A673 (cell line): ENCODE measurements at regions of chr1 and their contacts with region 1.

Region 1: GRCh38 chr1:176897350-176898236 is 266.9 kb downstream of the ASTN1 start:
- DNase-seq: peak; percentile 82
- H3K4me3 ChIP-seq: peak overlapping the region; percentile 32
- H3K27ac ChIP-seq: no peak overlapping the region
- H3K4me1 ChIP-seq: peaks cover 36% of the 10 kb centered on the region
- H3K27me3 ChIP-seq: no peaks in the 10 kb centered on the region
- CTCF ChIP-seq: peak; percentile 96

Region 2: DNA sequence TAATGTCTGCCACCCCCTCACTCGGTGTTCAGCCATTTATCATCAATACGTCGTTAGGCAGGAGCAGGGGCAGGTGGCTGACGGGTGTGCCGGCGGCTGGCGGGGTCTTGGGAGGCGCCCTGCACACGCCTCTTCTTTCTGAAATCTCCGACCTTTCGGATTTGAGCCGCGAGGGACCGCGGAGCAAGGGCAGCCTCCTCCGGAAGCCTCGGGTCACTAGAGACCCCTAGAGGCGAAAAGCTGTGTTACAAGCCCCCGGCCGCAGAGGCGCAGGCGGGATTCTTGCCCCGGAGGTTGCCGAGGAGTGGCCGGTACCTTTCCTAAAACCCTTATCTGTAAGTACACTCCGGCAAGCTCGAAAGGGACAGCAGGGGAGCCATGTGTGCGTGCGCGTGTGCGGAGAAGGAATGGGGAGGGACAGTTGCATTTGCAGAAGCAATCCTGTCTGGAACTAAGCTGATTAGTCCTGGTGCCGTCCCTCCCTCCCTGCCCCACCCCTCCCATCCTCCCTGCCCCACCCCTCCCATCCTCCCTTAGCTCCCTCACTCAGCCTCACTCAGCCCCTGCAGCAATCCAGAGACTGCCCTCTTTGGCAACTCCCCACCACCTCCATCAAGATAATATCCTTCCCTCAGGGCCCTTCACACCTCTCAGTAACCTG is 284.2 kb after region 1 on chr1:
- CTCF ChIA-PET with region 1: interaction called, 10 read pairs
- POLR2A ChIA-PET with region 1: no interaction called
- intact Hi-C with region 1: loop called (anchors 1 kb)
- DNase-seq: peak; percentile 81
- H3K4me3 ChIP-seq: peak overlapping the region; percentile 38
- H3K27ac ChIP-seq: no peak overlapping the region
- H3K4me1 ChIP-seq: peaks cover 9% of the 10 kb centered on the region
- H3K27me3 ChIP-seq: peaks cover 6% of the 10 kb centered on the region
- CTCF ChIP-seq: peak; percentile 89

Region 3: DNA sequence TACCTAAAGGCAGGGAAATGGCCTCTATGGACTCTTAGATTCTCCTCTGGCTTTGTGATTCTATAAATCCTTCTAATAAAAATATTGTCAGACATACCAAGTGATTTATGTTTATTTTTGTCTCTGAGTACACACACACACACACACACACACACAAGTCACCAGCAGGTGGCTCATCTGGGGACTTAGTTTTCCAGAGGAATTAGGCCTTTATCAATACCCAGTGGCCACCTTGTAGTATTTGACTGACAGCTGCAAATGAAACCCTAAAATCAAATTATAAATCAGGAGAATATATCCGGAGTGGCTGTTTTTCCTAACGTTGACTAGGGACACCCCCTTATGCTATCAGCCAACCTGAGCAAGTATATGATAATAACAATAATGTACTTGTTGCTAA is 531.7 kb after region 1 on chr1:
- CTCF ChIA-PET with region 1: no interaction called
- POLR2A ChIA-PET with region 1: no interaction called
- intact Hi-C with region 1: loop called (anchors 5 kb)
- DNase-seq: no peak
- H3K4me3 ChIP-seq: no peak overlapping the region
- H3K27ac ChIP-seq: no peak overlapping the region
- H3K4me1 ChIP-seq: peaks cover 19% of the 10 kb centered on the region
- H3K27me3 ChIP-seq: no peaks in the 10 kb centered on the region
- CTCF ChIP-seq: peak; percentile 30; the same call in 1 of the 2 replicates

Region 4: DNA sequence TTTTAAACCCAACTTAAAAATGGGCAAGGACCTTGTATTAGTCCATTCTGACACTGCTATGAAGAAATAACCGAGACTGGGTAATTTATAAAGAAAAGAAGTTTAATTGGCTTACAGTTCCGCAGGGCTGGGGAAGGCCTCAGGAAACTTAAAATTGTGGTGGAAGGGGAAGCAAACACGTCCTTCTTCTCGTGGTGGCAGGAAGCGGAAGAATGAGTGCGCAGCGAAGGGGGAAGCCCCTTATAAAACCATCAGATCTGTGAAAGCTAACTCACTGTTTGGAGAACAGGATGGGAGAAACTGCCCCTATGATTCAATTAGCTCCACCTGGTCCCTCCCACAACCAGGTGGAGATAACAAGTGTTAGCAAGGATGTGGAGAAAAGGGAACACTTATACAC is 834.6 kb after region 1 on chr1:
- CTCF ChIA-PET with region 1: no interaction called
- POLR2A ChIA-PET with region 1: no interaction called
- intact Hi-C with region 1: loop called (anchors 2 kb)
- DNase-seq: peak; percentile 83
- H3K4me3 ChIP-seq: peak overlapping the region; percentile 50
- H3K27ac ChIP-seq: peak overlapping the region; percentile 97
- H3K4me1 ChIP-seq: peaks cover 49% of the 10 kb centered on the region
- H3K27me3 ChIP-seq: no peaks in the 10 kb centered on the region
- CTCF ChIP-seq: no peak

Region 5: GRCh38 chr1:177913762-177914540 is 1016.4 kb after region 1 on chr1:
- CTCF ChIA-PET with region 1: interaction called, 3 read pairs
- POLR2A ChIA-PET with region 1: no interaction called
- intact Hi-C with region 1: loop called (anchors 1 kb)
- DNase-seq: peak; percentile 84
- H3K4me3 ChIP-seq: no peak overlapping the region
- H3K27ac ChIP-seq: no peak overlapping the region
- H3K4me1 ChIP-seq: peaks cover 6% of the 10 kb centered on the region
- H3K27me3 ChIP-seq: no peaks in the 10 kb centered on the region
- CTCF ChIP-seq: peak; percentile 82